GM10248 (cell line): ENCODE measurements at regions of chr3 and their contacts with region 1.

Region 1: GRCh38 chr3:111882799-111883198 is 23.7 kb downstream of the PHLDB2 start:
- DNase-seq: peak; percentile 17
- CTCF ChIP-seq: no peak

Region 2: GRCh38 chr3:111895079-111895478 is 12.3 kb after region 1 on chr3:
- CTCF ChIA-PET with region 1: interaction called, 13 read pairs
- POLR2A ChIA-PET with region 1: interaction called, 4 read pairs
- DNase-seq: peak; percentile 14
- CTCF ChIP-seq: no peak

Region 3: DNA sequence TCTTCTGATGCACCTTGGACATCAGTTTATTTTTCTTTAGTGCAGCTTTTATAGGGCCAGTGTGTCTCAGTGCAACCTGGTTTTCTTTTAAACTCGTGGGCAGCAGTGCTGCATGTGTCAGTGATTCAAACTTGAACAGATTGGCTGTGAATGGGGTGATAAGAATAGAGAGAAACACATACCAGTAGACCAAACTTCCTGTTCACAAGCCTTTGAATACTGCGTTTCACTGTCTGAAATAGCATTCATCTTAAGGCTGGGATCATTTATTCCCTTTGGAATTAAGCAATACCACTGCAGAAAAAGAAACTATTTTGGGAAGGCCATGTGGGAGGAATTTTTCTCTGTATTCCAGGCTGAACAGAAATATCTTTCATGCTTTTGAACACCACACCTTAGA is 28.0 kb after region 1 on chr3:
- CTCF ChIA-PET with region 1: no interaction called
- POLR2A ChIA-PET with region 1: no interaction called
- DNase-seq: no peak
- CTCF ChIP-seq: no peak

Region 4: DNA sequence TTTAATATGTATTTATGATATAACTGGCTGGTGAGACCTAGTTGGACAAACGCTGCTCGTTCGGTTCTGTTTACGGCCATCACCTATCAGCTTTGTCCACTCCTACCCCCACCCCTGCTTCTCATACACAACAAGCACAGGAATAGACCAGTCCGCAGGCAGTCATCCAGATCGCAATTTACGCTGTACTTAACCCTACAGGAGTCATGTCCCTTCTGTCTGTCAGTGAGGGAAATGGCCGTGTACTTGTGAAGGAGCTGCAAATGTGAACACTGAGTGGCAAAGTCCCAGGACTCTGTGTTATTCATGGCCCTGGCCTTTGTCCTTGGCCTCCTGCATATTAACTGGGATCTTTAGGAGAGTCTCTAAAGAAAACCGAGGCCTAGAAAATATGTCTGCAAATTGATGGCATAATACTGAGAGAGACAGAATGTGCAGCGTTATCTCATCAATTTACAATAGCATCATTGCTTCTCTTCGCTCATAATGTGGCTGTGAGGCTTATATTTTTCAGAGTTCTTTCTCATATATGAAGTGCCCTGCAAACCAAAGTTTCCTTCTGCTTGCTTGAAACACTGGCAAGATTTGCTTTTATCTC is 88.8 kb after region 1 on chr3:
- CTCF ChIA-PET with region 1: no interaction called
- POLR2A ChIA-PET with region 1: no interaction called
- DNase-seq: no peak
- CTCF ChIP-seq: no peak

Region 5: GRCh38 chr3:112489674-112490479 is 607.1 kb after region 1 on chr3:
- CTCF ChIA-PET with region 1: no interaction called
- POLR2A ChIA-PET with region 1: no interaction called
- DNase-seq: no peak
- CTCF ChIP-seq: no peak